H1 (cell line): ENCODE measurements at regions of chr20 and their contacts with region 1.

Region 1: DNA sequence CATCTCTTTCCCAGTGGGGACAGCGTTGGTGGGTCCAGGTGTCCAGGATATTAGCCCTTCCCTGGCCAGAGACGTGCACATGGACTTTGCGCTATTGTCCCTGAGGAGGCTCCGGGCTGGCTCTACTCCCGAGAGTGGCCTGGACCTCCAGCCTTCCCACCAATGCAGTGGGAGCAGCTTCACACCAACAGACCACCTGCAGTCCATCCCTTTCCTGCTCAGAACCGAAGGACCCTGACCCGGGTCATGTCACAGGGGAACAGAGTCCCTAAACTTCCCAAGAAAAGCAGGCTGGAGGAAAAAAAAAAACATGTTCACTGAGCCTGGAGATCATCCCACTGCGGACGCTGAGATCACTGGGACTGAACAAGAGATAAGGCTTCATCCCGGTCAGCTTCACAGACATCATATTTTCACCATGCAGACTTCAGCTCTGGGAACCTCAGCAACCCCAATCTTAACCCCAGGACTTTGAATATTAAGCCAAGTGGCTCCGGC is 18.3 kb downstream of the ZMYND8 start:
- DNase-seq: no peak
- H3K4me3 ChIP-seq: no peak overlapping the region
- H3K27ac ChIP-seq: peak overlapping the region; percentile 24; the same call in 1 of the 2 replicates
- H3K4me1 ChIP-seq: peaks cover 5 to 23% (median 14%) of the 10 kb centered on the region in 4 experiments; a peak in 6 of 7 replicates
- H3K27me3 ChIP-seq: no peaks in the 10 kb centered on the region
- CTCF ChIP-seq: no peak
- EP300 ChIP-seq: no peak
- POLR2A ChIP-seq: no peak
- RAD21 ChIP-seq: no peak

Region 2: GRCh38 chr20:47278563-47279348 is 59.4 kb before region 1 on chr20:
- CTCF ChIA-PET with region 1: no interaction called
- POLR2A ChIA-PET with region 1: no interaction called
- DNase-seq: no peak
- H3K4me3 ChIP-seq: no peak overlapping the region
- H3K27ac ChIP-seq: peak overlapping the region; percentile 46; the same call in 1 of the 2 replicates
- H3K4me1 ChIP-seq: peaks cover 0 to 3% (median under 1%) of the 10 kb centered on the region in 4 experiments; a peak in 2 of 7 replicates
- H3K27me3 ChIP-seq: no peaks in the 10 kb centered on the region
- CTCF ChIP-seq: no peak
- EP300 ChIP-seq: no peak
- POLR2A ChIP-seq: no peak
- RAD21 ChIP-seq: no peak

Region 3: GRCh38 chr20:47348539-47349142 is 10.5 kb after region 1 on chr20:
- CTCF ChIA-PET with region 1: interaction called, 3 read pairs
- POLR2A ChIA-PET with region 1: interaction called, 16 read pairs
- DNase-seq: no peak
- H3K4me3 ChIP-seq: peak overlapping the region in 1 of 4 experiments; percentile 25; a peak in 2 of 8 replicates
- H3K27ac ChIP-seq: peak overlapping the region; percentile 70
- H3K4me1 ChIP-seq: peaks cover 44 to 72% (median 49%) of the 10 kb centered on the region in 4 experiments
- H3K27me3 ChIP-seq: no peaks in the 10 kb centered on the region
- CTCF ChIP-seq: no peak
- EP300 ChIP-seq: no peak
- POLR2A ChIP-seq: peak in 1 of 2 experiments; percentile 23; a peak in 1 of 3 replicates
- RAD21 ChIP-seq: no peak

Region 4: GRCh38 chr20:47535088-47535487 is 196.9 kb after region 1 on chr20:
- CTCF ChIA-PET with region 1: no interaction called
- POLR2A ChIA-PET with region 1: no interaction called
- DNase-seq: peak; percentile 50 to 65
- H3K4me3 ChIP-seq: no peak overlapping the region
- H3K27ac ChIP-seq: no peak overlapping the region
- H3K4me1 ChIP-seq: peaks cover 0 to 2% (median 1%) of the 10 kb centered on the region in 4 experiments; a peak in 2 of 7 replicates
- H3K27me3 ChIP-seq: no peaks in the 10 kb centered on the region
- CTCF ChIP-seq: peak; percentile 72 to 89 (median 87)
- EP300 ChIP-seq: no peak
- POLR2A ChIP-seq: no peak
- RAD21 ChIP-seq: peak; percentile 56 to 64